ENCODE measurements at regions of chr9 and their contacts with region 1.

Region 1: GRCh38 chr9:89000973-89001916 is 10.0 kb downstream of the S1PR3 start:
- DNase-seq: peak; percentile 50 to 55
- ATAC-seq: peak; percentile 61 to 69
- H3K4me3 ChIP-seq: no peak overlapping the region
- H3K27ac ChIP-seq: peak overlapping the region in 2 of 4 donors; percentile 7 to 9
- H3K4me1 ChIP-seq: peaks cover 0 to 10% of the 10 kb centered on the region in 2 donors
- H3K27me3 ChIP-seq: peaks cover 0 to 6% (median 0%) of the 10 kb centered on the region in 3 donors
- CTCF ChIP-seq: peak; percentile 36 to 63 (median 54)
- POLR2A ChIP-seq: no peak

Region 2: DNA sequence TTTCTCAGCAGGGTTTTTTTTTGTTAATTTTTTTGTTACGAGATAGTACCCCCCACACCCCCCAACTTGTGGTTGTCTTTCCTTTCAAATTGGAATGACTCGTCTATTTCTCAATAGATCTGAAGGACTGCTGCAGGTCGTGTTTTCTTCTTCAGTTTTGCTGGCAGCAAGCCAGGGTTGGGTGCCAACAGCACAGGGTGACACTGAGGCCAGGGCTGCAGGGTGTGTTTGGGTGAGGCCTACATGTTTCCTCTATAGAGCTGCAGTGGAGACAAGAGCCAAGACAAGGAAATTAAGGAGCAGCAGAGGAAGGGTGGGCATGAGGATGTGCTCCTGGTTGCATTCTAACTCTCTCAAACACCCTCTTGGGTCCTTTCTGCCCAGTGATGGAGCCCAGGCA is 414.1 kb before region 1 on chr9:
- in situ Hi-C with region 1: loop called (anchors 5 to 10 kb)
- intact Hi-C with region 1: no loop called
- DNase-seq: no peak
- ATAC-seq: no peak
- H3K4me3 ChIP-seq: no peak overlapping the region
- H3K27ac ChIP-seq: no peak overlapping the region
- H3K4me1 ChIP-seq: no peaks in the 10 kb centered on the region
- H3K27me3 ChIP-seq: no peaks in the 10 kb centered on the region
- CTCF ChIP-seq: no peak
- POLR2A ChIP-seq: no peak

Region 3: DNA sequence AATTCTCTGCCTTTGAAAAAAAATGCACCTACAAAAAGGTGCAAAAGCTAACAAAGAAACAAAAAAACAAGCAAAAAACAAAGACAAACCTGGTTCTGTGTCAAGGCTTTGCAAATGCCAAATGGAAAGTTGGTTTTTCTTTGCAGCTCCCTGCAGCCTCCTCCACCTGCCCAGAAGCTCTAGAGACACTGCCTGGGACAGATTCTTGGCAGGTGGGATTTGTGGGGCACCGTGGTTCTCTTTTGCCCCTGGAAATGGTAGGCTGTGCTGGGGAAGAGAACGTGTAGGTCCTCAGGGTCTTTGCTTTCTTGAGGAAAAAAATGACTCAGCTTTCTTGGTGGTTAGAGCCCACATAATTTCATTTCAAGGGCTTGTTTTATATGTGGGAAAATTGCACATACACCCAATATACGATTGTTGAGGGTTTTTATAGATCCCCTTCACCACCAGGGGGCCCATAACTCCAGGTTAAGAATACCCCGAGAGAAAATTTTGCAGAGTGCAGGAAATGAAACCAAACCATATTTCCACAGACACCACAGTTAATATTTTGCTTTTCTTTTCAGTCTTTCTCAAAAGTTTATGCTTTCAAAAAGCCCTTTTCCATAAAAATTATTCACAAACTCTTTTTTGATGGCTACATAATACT is 407.6 kb before region 1 on chr9:
- in situ Hi-C with region 1: loop called (anchors 5 to 10 kb)
- intact Hi-C with region 1: loop called (anchors 1 kb)
- DNase-seq: no peak
- ATAC-seq: no peak
- H3K4me3 ChIP-seq: no peak overlapping the region
- H3K27ac ChIP-seq: no peak overlapping the region
- H3K4me1 ChIP-seq: no peaks in the 10 kb centered on the region
- H3K27me3 ChIP-seq: no peaks in the 10 kb centered on the region
- CTCF ChIP-seq: peak; percentile 25 to 53 (median 48)
- POLR2A ChIP-seq: no peak

Measured in gastrocnemius medialis (tissue), 4 donors.